ENCODE measurements at regions of chr1 and their contacts with region 1.

Region 1: DNA sequence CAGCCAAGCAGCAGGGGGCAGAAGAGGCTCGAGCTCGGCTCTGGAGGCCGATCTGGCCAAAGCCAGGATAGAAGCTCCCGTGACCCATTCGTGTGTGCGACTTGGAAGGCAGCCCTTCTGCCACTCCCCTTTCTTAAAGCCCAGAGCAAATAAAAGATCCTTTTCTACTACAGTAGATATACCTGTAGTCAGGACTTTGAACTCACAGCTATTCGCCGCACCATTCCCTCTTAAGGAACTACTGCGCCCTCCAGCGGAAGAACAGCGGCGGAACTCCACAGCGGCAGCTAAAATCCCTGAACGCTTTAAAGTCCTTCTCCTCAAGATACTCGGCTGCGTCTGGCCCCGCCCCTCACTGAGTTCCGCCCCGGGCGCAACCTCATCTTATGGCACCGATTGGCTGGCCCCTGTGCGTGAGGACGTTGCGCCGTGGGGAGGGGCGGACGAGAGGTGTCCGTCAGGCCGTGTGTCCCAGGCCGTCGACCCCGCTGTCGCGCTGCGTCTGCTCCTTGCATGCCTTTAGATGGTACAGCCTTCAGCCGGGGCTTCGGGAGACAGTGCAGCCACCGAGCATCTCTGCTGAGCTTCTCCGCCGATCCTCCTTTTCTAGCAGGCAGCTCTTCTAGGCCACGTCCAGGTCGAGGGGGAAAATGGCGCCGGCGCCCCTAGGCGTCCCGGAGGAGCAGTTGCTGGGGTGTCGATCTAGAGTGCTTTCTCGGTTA is at the start of gene LRIG2:
- DNase-seq: peak; percentile 96
- ATAC-seq: peak; percentile 96
- H3K4me3 Mint-ChIP-seq: peak within 1 kb of the TSS; percentile 95
- H3K27ac Mint-ChIP-seq: peak within 1 kb of the TSS; percentile 95
- H3K4me1 Mint-ChIP-seq: peaks cover 31% of the 10 kb centered on the region
- H3K27me3 Mint-ChIP-seq: no peaks in the 10 kb centered on the region
- CTCF ChIP-seq: peak; percentile 49
- total RNA-seq, gene LRIG2: 23.8 and 30.7 TPM in 2 replicates

Region 2: DNA sequence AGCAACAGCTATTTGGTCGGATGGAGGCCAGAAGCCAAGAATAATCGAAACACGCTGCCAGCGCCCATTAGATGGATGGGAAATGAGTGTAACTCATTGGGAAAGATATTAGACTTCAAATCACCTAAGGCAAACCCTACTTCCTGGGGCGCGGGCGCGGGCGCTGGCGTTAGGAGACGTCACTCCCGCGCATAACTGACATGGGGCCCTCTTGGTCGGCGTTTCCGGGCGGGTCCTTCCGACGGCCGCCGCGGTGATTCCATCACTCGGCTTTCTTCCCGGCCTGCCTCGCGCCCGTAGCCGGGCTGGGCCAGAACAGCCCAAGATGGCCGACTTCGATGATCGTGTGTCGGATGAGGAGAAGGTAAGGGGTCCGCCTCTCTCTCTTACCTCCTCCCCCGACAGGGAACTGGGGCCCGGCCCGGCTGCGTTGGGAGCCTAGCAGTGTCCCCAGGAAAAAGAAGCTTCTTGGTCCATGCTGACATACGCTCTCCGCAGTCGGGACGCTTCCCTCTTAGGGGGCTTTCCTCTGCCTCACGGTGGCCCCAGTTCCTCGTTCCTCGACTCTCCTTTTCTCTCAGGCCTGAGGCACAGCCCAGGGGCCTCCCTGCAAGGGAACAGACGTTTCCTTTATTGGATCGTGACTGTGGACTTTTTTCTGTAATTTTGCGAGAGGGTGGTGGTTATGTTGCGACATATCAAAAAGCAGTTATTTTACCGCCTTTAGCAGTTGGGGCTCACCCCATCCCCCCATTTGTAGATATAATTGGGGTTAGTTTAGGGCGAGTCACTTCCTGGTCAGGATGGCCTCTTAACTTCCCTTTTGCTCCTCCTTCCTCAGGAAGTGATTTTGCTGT is 453.2 kb before region 1 on chr1 and contains the start of gene CAPZA1:
- CTCF ChIA-PET with region 1: no interaction called
- POLR2A ChIA-PET with region 1: interaction called, 6 read pairs
- intact Hi-C with region 1: loop called (anchors 2 kb)
- DNase-seq: peak; percentile 82
- ATAC-seq: peak; percentile 83
- H3K4me3 Mint-ChIP-seq: peak within 1 kb of the TSS; percentile 97
- H3K27ac Mint-ChIP-seq: peak within 1 kb of the TSS; percentile 99
- H3K4me1 Mint-ChIP-seq: peaks cover 54% of the 10 kb centered on the region
- H3K27me3 Mint-ChIP-seq: no peaks in the 10 kb centered on the region
- CTCF ChIP-seq: no peak
- total RNA-seq, gene CAPZA1: 221 and 227 TPM in 2 replicates

Region 3: GRCh38 chr1:112955781-112956543 is 117.0 kb before region 1 on chr1 and contains the start of gene SLC16A1:
- CTCF ChIA-PET with region 1: interaction called, 12 read pairs
- POLR2A ChIA-PET with region 1: interaction called, 23 read pairs
- intact Hi-C with region 1: loop called (anchors 2 kb)
- DNase-seq: peak; percentile 89
- ATAC-seq: peak; percentile 82
- H3K4me3 Mint-ChIP-seq: peak within 1 kb of the TSS; percentile 98
- H3K27ac Mint-ChIP-seq: peak within 1 kb of the TSS; percentile 98
- H3K4me1 Mint-ChIP-seq: peaks cover 49% of the 10 kb centered on the region
- H3K27me3 Mint-ChIP-seq: no peaks in the 10 kb centered on the region
- CTCF ChIP-seq: no peak
- total RNA-seq, gene SLC16A1: 17.8 and 17.9 TPM in 2 replicates

Region 4: DNA sequence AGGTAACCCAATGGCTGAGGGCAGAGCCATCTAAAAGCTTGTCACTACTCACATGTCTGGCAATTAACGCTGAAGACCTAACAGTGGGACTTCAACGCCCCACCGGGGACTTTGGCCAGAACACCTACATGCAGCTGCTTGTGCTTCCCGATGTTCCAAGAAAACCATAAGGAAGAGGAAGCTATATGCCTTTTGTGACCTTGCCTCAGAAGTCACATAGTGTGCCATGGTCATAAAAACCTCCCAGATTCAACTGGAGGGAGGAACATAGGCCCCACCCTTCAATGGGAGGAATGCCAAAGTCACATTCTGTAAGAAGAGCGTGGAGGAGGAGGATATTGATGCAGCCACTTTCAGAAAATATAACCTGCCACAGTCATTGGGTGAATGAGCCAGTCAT is 169.6 kb after region 1 on chr1:
- CTCF ChIA-PET with region 1: no interaction called
- POLR2A ChIA-PET with region 1: no interaction called
- intact Hi-C with region 1: no loop called
- DNase-seq: no peak
- ATAC-seq: no peak
- H3K4me3 Mint-ChIP-seq: no peak overlapping the region
- H3K27ac Mint-ChIP-seq: no peak overlapping the region
- H3K4me1 Mint-ChIP-seq: no peaks in the 10 kb centered on the region
- H3K27me3 Mint-ChIP-seq: peaks cover 13% of the 10 kb centered on the region
- CTCF ChIP-seq: no peak

Region 5: DNA sequence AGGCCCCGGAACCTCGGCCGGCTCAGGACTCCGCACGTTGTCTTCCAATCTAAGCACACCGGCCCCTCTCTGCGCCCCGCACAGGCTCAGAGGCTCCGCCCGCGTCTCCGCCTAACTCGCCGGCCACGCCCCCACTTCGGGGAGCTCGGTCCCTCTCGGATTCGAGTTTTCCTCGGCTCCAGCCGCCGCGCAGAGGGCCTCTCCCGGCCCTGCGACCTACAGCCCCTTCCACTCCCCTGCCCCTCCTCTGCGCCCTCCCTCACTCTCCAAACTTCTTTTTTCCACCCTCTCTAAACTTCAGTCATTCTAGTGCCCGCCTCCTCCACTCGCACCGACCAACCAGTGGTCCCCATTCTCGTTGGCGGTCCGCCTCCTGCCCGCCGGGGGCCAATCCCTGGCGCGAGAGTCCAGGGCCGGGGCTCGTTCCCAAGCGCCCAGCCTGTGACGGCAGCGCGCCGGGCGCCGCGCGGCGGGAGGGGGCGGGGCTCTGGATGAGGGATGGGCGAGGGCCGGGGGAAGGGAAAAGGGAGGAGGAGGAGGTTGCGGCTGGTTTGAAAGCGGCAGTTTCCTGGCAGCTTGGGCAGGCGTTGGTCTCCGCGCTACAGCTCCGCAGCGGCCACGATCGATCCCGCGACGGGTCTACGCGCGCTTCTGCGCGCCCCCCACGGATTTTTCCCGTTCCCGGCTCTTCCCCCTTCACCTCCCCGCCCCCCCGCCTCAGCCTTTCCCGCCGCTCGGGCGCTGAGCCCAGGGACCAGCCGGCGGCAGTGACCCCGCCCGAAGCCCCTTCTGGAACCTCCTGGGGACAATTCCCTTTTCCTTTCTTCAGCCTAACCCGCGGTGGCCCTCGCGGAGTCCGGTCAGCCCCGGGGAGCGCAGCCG is 317.3 kb after region 1 on chr1 and contains the start of gene MAGI3:
- CTCF ChIA-PET with region 1: no interaction called
- POLR2A ChIA-PET with region 1: no interaction called
- intact Hi-C with region 1: loop called (anchors 2 kb)
- DNase-seq: peak; percentile 83
- ATAC-seq: peak; percentile 98
- H3K4me3 Mint-ChIP-seq: peak within 1 kb of the TSS; percentile 95
- H3K27ac Mint-ChIP-seq: peak within 1 kb of the TSS; percentile 77
- H3K4me1 Mint-ChIP-seq: peaks cover 18% of the 10 kb centered on the region
- H3K27me3 Mint-ChIP-seq: peaks cover 29% of the 10 kb centered on the region
- CTCF ChIP-seq: no peak
- total RNA-seq, gene MAGI3: 0.83 and 1.0 TPM in 2 replicates

Region 6: DNA sequence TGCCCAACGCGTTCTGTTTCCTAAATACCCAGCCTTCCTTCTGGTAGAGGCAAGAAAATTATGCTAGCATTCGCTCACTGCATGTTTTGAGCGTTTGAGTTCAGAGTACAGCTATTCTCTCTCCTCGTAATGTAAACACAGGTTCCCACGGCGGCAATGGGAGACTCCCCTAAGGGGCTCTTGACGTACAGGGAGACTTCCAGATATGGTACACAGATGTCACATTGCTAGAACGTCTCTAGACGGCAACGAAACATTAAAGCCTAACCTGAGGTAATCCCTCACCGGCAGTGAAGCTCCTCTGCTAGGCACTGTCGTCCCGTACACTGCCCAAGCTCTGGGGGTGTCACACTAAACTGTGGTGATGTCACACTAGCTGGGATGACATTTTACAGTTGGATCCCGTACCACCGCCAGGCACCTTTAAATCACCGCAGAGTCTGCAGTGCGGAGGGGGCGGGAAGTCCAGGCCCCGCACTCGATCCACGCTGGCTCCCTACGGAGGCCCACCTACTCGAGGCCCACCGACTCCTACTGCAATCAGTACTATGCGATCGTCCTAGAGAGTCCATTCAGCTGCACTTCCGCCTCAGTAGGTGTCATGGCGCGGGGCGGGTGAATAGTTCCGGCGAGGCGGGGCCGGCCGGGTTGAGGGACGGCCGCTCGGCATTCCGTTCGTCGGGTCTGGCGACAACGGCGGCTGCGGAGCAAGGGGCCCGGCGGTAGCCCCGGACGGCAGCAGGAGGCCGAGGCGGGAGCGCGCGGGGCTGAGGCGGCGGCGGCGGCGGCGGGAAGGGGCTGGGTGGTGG is 856.2 kb after region 1 on chr1 and contains the start of gene HIPK1:
- CTCF ChIA-PET with region 1: no interaction called
- POLR2A ChIA-PET with region 1: interaction called, 7 read pairs
- intact Hi-C with region 1: loop called (anchors 2 kb)
- DNase-seq: peak; percentile 93
- ATAC-seq: peak; percentile 73
- H3K4me3 Mint-ChIP-seq: peak within 1 kb of the TSS; percentile 99
- H3K27ac Mint-ChIP-seq: peak within 1 kb of the TSS; percentile 99
- H3K4me1 Mint-ChIP-seq: peaks cover 50% of the 10 kb centered on the region
- H3K27me3 Mint-ChIP-seq: no peaks in the 10 kb centered on the region
- CTCF ChIP-seq: no peak
- total RNA-seq, gene HIPK1: 38.0 and 39.0 TPM in 2 replicates

Region 7: DNA sequence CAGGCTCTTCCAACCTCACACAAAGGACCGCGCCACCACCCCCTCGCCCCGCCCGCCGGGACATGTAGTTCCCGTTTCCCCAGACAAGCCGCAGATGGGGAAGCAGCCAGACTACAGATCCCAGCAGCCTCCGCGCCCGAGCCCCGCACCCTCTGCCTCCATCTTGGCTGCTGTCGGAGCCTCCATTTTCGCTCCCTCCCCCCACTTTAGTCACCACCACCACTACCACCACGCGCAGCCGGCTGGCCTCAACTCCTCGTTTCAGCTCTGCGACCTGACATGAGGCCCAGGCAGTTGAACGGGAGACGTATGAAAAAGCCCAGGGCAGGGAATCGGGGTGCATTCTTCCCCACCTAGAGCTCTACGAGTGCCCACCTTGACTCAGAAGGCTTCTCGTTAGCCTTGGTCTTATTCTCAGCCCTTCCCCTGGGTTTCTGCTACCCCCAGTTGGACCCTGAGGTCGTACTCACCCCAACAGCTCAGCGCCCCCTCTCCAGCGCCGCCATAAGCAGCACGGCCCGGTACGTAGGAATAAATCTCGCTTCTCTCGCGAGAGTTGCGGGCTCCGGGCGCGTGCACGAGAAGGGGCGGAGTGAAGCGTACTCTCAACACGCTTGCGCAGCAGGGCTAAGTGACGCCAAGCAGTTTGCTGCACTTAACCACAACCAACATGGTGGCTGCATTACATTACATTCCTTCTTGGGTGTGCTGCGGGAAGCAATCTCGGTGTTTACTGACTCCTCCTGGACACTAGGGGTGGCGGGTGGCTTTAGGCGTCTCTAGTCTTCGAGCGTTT is 1684.7 kb after region 1 on chr1 and contains the start of gene CSDE1:
- CTCF ChIA-PET with region 1: no interaction called
- POLR2A ChIA-PET with region 1: no interaction called
- intact Hi-C with region 1: loop called (anchors 10 kb)
- DNase-seq: peak; percentile 92
- ATAC-seq: peak; percentile 90
- H3K4me3 Mint-ChIP-seq: peak within 1 kb of the TSS; percentile 100
- H3K27ac Mint-ChIP-seq: peak within 1 kb of the TSS; percentile 100
- H3K4me1 Mint-ChIP-seq: peaks cover 57% of the 10 kb centered on the region
- H3K27me3 Mint-ChIP-seq: no peaks in the 10 kb centered on the region
- CTCF ChIP-seq: no peak
- total RNA-seq, gene CSDE1: 416 and 424 TPM in 2 replicates

Measured in activated B cell treated with CpG ODN at 0.5 μM for 24 hours (primary cell).